ENCODE measurements at regions of chr5 and their contacts with region 1.

Region 1: DNA sequence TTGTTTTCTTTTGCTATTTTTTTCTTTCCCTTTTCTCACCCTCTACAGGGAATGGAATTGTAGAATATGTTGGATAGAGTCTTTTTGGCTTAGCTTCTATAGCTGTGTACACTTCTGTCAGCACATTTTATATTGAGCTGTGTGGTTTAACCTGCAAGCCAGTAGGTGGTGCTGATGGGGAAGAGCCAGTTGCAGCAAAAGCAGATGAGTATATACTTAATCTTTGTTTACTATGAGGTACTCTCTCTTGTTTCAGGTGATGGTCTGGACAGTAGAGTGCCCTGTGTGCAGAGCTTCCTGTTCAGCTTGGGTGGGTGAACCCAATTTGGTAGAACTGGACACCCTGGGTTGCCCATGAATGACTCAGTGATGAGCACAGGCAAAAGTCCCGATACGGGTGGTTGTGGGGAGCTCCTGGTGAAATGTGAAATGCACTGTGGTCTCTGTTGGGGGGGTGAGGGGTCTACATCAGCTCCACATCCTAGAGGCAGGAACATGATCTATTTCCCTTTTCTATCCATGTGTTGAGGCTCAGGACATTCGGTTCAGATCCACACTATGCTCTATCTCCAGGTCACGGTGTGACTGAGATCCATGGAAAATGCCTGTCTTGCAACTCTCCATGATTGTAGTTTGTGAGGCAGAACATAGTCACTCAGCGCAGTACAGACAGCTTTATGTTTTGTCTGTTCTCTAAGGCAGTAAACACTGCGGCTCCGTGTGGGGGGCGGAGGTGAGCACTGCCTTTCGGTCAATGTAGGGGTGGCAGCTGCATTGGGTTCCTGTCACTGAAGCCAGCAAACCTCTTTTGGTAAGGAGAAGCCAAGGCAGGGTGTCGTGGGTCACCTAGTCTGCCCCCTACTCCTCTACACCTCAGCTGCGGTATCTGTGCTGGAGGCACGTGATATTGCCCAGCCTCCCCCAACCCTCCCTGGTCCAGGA is 353.2 kb downstream of the PRR16 start:
- DNase-seq: no peak

Region 2: GRCh38 chr5:120538644-120539043 is 278.7 kb before region 1 on chr5:
- intact Hi-C with region 1: no loop called
- DNase-seq: no peak

Region 3: DNA sequence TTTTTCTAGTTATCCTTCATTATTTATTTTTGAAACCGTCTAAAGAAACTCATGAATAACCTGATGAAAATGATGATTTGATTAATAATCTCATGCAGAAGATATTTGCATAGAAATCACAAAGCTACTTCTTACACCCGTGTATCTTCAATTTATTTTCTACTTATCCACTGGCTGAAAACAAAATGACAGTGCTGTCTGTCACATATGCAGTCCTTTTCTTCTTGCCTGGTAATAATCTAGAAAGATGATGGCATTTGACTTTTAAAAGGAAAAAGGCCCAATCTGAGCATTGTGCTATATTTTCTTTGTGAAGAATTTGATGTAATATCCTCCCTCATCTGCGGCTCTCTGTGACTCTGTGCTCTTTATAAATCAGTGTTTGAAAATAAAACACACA is 99.9 kb before region 1 on chr5:
- intact Hi-C with region 1: no loop called
- DNase-seq: no peak

Region 4: DNA sequence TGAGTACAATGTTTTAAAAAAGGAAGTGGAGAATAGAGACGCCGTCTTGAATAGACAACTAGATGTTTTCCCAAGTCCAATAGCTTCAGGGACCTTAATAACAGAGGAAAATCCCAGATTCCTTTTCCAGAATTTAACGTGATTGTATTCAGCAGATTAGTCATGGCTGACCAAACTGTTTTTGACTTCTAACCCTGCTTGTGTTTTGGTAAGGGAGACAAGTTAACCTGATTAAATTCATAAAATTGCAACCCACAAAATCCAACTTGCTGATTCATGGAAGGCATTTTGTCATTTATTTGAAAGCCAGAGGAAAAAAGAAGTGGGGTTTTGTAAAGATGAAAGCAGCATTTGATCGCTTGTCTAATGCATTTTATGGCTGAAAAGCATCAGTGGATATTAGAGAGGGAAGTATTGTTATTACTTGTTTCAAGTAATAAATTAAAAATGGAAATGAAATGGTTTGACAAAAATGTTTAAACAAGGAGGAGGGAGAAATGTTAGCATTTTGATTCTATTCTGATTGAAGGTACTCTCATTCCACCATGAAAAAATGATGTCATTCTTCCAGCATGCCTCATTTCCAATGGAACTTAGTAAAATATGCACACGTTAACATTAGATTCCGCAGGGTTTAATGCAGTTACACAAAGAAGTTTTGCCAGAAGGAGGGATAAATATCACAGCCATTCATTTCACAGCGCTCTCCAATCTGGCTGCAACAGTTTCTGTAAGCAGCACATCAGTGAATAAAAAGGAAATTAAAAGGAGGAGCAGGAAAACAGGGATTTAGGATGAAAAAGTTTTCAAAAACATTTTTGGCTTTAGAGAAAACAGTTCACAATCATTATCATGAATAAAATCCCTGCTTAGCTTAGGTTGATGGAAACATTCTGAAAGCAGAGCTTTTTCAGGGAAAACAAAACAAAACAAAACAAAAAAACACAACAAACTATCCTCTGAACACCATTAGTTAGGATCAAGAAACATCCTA is 38.5 kb before region 1 on chr5:
- intact Hi-C with region 1: no loop called
- DNase-seq: no peak

Region 5: DNA sequence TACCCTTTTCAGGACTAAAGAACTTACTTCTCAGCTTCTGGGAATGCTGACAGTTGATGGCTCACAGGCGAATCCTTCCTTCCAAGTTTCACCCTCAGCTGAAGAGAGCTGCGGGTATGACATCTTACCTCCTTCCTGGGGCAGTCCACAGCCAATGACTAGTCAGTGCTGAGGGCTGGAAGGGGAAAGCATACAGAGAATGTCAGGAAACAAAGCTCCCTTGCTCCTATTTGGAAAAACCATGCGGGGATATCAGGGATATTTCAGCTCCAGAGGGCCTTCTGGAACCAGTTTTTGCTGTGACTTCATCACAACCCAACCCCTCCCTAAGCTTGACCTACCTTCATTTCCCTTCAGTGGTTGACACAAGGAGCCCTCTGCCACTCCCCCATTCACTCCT is 1050.1 kb after region 1 on chr5:
- intact Hi-C with region 1: loop called (anchors 10 kb)
- DNase-seq: no peak